Prostate gland (tissue), 2 donors: ENCODE measurements at regions of chr15 and their contacts with region 1.

Region 1: GRCh38 chr15:50718700-50719125 is 32.1 kb upstream of the TRPM7 start:
- DNase-seq: no peak
- H3K4me3 ChIP-seq: no peak overlapping the region
- H3K27ac ChIP-seq: no peak overlapping the region
- H3K4me1 ChIP-seq: no peaks in the 10 kb centered on the region
- H3K27me3 ChIP-seq: no peaks in the 10 kb centered on the region
- CTCF ChIP-seq: no peak
- POLR2A ChIP-seq: no peak

Region 2: DNA sequence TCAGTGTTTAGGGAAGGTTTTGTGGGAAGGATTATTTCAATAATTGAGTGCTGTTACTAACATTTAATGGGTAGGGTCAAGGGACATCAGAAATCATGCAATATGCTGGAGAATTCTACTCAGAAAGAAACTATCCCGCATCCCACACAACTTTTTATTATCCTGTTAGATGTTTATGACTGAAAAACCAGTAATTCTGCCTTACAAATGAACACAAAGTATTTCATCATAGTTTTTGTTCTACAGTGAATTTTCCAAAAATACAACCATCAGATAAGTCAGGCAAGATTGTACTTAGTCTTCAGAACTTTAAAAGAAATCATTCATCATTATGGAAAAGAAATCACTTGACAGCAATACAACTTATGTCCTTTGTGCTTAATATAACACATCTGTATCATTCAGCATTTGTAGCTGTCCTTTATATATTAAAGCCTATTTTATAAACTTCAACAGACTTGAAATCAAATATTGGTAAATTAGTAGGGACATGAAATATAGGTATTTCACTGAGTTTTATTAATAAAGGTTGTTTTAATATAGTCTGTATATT is 94.0 kb before region 1 on chr15:
- intact Hi-C with region 1: no loop called
- DNase-seq: no peak
- H3K4me3 ChIP-seq: no peak overlapping the region
- H3K27ac ChIP-seq: no peak overlapping the region
- H3K4me1 ChIP-seq: no peaks in the 10 kb centered on the region
- H3K27me3 ChIP-seq: no peaks in the 10 kb centered on the region
- CTCF ChIP-seq: no peak
- POLR2A ChIP-seq: no peak

Region 3: GRCh38 chr15:50653156-50653745 is 65.5 kb before region 1 on chr15:
- intact Hi-C with region 1: loop called (anchors 10 kb)
- DNase-seq: no peak
- H3K4me3 ChIP-seq: no peak overlapping the region
- H3K27ac ChIP-seq: no peak overlapping the region
- H3K4me1 ChIP-seq: no peaks in the 10 kb centered on the region
- H3K27me3 ChIP-seq: no peaks in the 10 kb centered on the region
- CTCF ChIP-seq: no peak
- POLR2A ChIP-seq: no peak

Region 4: DNA sequence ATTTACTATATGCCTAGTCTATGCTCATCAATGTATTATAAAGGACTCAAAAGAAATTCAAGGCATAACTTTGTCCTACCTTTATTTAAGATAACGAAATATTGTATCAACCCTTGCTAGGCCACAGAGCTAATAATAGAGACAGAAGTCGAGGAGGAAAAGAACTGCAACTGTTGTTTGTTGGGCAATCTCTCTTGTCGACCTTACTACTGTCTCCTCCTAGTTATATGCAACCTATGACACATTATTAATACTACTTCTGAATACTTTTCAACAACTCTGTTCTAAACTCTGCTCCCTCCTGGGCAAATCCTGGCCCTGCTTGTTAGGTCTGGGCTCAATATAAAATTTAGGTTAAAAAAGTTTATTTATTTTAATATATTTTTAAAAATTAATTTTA is 22.2 kb after region 1 on chr15:
- intact Hi-C with region 1: no loop called
- DNase-seq: no peak
- H3K4me3 ChIP-seq: no peak overlapping the region
- H3K27ac ChIP-seq: no peak overlapping the region
- H3K4me1 ChIP-seq: no peaks in the 10 kb centered on the region
- H3K27me3 ChIP-seq: no peaks in the 10 kb centered on the region
- CTCF ChIP-seq: no peak
- POLR2A ChIP-seq: no peak